ENCODE measurements at regions of chr9 and their contacts with region 1.

Region 1: DNA sequence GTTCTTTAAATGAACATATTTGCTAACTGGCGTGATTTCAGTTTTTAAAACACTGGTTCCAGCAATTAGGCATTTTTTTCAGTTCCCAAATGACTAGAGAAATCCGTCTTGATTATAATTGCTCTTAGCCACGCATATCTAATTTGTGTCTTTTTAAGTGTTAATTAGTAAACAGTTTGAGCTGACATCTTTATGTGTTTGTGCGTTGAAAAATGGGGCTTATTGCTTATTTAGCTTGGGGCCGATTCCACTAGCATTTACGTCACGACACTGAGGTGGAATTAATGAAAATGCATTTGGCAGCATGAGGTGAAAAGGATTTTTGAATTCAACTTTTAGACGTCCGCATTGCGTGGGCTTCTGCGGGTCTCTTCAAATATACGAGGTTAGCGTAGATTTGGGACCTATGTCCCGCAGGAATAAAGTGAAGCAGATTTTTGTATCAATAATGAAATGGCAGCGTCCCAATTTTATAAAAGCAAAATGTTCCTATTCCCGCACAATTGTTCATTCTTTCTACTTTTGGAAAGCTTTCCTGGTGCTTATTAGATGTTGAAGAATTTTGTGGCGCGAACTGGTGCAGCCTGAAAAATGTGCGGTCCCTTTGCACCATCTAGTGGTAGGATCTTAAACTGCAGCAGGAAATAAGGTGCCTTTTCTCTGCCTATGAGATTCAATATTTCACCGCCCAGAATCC is 122.7 kb upstream of the LMX1B start:
- DNase-seq: no peak
- ATAC-seq: peak; percentile 74
- H3K4me3 ChIP-seq: no peak overlapping the region
- H3K27ac ChIP-seq: no peak overlapping the region
- H3K4me1 ChIP-seq: no peaks in the 10 kb centered on the region
- H3K27me3 ChIP-seq: no peaks in the 10 kb centered on the region
- CTCF ChIP-seq: peak; percentile 77 to 96 (median 88)
- POLR2A ChIP-seq: no peak
- RAD21 ChIP-seq: peak; percentile 94

Region 2: GRCh38 chr9:125558453-125559092 is 932.4 kb before region 1 on chr9:
- CTCF ChIA-PET with region 1: no interaction called
- POLR2A ChIA-PET with region 1: no interaction called
- RAD21 ChIA-PET with region 1: no interaction called
- intact Hi-C with region 1: loop called (anchors 1 kb)
- DNase-seq: peak; percentile 50
- ATAC-seq: peak; percentile 93
- H3K4me3 ChIP-seq: no peak overlapping the region
- H3K27ac ChIP-seq: no peak overlapping the region
- H3K4me1 ChIP-seq: no peaks in the 10 kb centered on the region
- H3K27me3 ChIP-seq: no peaks in the 10 kb centered on the region
- CTCF ChIP-seq: peak; percentile 60 to 81 (median 81)
- POLR2A ChIP-seq: no peak
- RAD21 ChIP-seq: peak; percentile 86

Region 3: DNA sequence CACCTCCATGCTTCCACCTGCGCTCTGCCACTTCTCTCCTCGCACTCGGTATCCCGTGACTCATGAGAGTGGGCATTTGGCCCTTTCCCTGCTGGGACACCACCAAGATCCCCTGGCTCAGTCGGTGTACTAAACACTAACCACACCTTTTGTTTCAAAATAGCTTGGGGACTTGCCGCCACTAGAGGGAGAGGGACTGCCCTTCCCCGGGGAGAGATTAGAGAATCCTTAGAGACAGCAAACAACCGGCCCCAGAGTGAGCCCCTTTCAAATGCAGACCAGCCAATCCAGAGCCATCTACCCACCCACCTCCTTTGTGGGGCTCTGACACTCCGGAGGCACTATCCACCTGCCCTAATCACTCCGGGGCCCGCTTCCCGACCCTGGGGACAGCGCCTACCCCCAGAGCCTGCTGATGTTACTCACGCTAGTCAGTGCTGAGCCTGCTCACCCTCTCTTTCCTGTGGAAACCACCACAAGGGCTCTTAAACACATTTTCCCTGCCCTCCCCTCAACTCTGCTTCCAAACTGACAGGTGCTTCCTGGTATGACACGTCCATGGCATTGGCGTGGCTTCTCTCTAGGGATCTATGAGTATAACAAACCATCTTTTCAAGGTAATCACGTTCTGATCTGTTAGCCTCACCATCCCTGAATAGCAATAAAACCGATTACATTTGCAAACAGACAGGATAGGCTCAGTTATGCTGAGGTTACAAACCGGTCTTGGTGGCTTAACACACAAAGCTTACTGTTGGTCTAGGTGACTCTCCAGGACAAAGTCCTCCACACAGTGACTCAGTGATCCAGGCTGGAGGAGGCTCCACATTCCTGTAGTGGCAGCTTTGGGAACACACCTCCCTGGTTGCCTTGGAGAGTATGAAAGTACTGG is 344.5 kb before region 1 on chr9:
- CTCF ChIA-PET with region 1: no interaction called
- POLR2A ChIA-PET with region 1: no interaction called
- RAD21 ChIA-PET with region 1: no interaction called
- intact Hi-C with region 1: loop called (anchors 10 kb)
- DNase-seq: no peak
- ATAC-seq: peak; percentile 93
- H3K4me3 ChIP-seq: no peak overlapping the region
- H3K27ac ChIP-seq: no peak overlapping the region
- H3K4me1 ChIP-seq: peaks cover 0 to 14% of the 10 kb centered on the region in 2 experiments; a peak in 2 of 4 replicates
- H3K27me3 ChIP-seq: no peaks in the 10 kb centered on the region
- CTCF ChIP-seq: peak; percentile 40 to 76 (median 71); a peak in 5 of 6 replicates
- POLR2A ChIP-seq: no peak
- RAD21 ChIP-seq: peak; percentile 48

Region 4: GRCh38 chr9:126228781-126229444 is 262.1 kb before region 1 on chr9:
- CTCF ChIA-PET with region 1: no interaction called
- POLR2A ChIA-PET with region 1: no interaction called
- RAD21 ChIA-PET with region 1: no interaction called
- intact Hi-C with region 1: loop called (anchors 1 kb)
- DNase-seq: peak; percentile 53
- ATAC-seq: peak; percentile 99
- H3K4me3 ChIP-seq: no peak overlapping the region
- H3K27ac ChIP-seq: no peak overlapping the region
- H3K4me1 ChIP-seq: no peaks in the 10 kb centered on the region
- H3K27me3 ChIP-seq: 0 out of 2 replicates have a peak, but pooled peaks cover 3% of the 10 kb centered on the region
- CTCF ChIP-seq: peak; percentile 88 to 96 (median 95)
- POLR2A ChIP-seq: no peak
- RAD21 ChIP-seq: peak; percentile 95

Region 5: GRCh38 chr9:126301985-126302603 is 188.9 kb before region 1 on chr9:
- CTCF ChIA-PET with region 1: interaction called, 16 read pairs
- POLR2A ChIA-PET with region 1: no interaction called
- RAD21 ChIA-PET with region 1: no interaction called
- intact Hi-C with region 1: loop called (anchors 1 kb)
- DNase-seq: peak; percentile 65
- ATAC-seq: peak; percentile 97
- H3K4me3 ChIP-seq: no peak overlapping the region
- H3K27ac ChIP-seq: no peak overlapping the region
- H3K4me1 ChIP-seq: peaks cover 0 to 8% of the 10 kb centered on the region in 2 experiments; a peak in 3 of 4 replicates
- H3K27me3 ChIP-seq: no peaks in the 10 kb centered on the region
- CTCF ChIP-seq: peak; percentile 86 to 88 (median 87)
- POLR2A ChIP-seq: no peak
- RAD21 ChIP-seq: peak; percentile 75